ENCODE measurements at regions of chr3 and their contacts with region 1.

Region 1: GRCh38 chr3:196942226-196942914 is at the start of gene NCBP2:
- DNase-seq: peak; percentile 99
- H3K4me3 ChIP-seq: peak within 1 kb of the TSS; percentile 90
- H3K27ac ChIP-seq: peak within 1 kb of the TSS; percentile 83
- H3K4me1 ChIP-seq: peaks cover 23% of the 10 kb centered on the region
- CTCF ChIP-seq: peak; percentile 75
- total RNA-seq, gene NCBP2: 46.4 and 66.7 TPM in 2 replicates

Region 2: DNA sequence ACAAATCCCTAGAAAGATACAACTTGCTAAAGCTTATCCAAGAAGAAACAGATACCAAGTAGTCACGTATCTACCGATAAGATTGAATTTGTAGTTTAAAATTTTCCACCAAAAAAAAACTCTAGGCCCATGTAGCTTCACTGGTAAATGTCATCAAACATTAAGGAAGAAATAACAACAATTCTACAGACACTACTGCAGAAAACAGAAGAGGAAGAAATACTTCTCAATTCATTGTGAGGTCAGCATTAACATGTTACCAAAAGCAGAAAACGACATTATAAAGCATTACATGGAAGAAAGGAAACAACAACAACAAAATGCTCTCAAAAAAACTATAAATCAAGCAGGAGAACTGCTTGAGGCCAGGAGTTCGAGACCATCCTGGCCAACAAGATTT is 576.6 kb before region 1 on chr3:
- CTCF ChIA-PET with region 1: no interaction called
- POLR2A ChIA-PET with region 1: no interaction called
- intact Hi-C with region 1: no loop called
- DNase-seq: no peak
- H3K4me3 ChIP-seq: no peak overlapping the region
- H3K27ac ChIP-seq: no peak overlapping the region
- H3K4me1 ChIP-seq: no peaks in the 10 kb centered on the region
- CTCF ChIP-seq: no peak

Region 3: GRCh38 chr3:196568246-196569002 is 373.9 kb before region 1 on chr3 and contains the starts of genes FBXO45 and WDR53:
- CTCF ChIA-PET with region 1: no interaction called
- POLR2A ChIA-PET with region 1: no interaction called
- intact Hi-C with region 1: loop called (anchors 1 kb)
- DNase-seq: peak; percentile 97
- H3K4me3 ChIP-seq: peak within 1 kb of the TSS; percentile 85
- H3K27ac ChIP-seq: peak within 1 kb of the TSS; percentile 52
- H3K4me1 ChIP-seq: peaks cover 28% of the 10 kb centered on the region
- CTCF ChIP-seq: no peak
- total RNA-seq, gene FBXO45: 10.6 and 12.5 TPM in 2 replicates
- total RNA-seq, gene WDR53: 10.8 TPM in 2 replicates

Region 4: DNA sequence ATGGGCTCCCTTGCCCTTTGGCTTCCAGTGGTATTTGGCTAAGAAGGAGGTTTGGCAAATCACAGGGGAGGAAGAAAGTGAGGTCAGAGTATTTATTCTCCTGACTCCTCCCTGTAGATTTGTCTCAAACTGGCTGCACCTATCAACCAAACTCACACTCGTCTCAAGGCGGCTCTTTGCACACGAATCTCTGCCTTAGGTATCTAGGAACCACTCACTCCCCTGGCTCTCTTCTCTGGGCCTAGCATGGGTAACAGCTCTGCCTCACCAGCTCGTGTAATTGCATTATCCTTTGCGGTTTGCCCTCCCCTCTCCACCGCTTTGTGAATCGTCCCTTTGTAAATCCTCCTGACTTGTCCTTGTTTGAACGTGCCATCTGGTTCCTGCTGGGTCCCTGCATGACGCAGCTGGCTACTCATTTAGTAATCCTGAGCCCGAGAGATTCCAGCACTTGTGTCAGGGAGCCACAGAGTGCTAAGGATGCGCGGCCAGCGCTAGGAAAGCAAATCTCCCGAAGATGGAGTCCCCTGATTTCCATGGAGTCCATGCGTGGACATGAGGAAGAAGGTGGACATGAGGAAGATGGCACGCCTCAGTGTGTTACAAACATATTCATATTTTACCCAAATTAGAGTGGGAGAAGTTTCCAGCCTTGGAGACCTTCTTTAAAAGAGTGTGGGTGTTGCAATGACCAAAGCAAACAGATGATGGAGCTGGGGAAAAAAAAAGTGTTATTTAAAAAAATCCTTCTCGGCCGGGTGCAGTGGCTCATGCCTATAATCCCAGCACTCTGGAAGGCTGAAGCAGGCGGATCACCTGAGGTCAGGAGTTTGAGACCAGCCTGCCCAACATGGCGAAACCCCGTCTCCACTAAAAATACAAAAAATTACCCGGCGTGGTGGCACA is 276.2 kb before region 1 on chr3:
- CTCF ChIA-PET with region 1: no interaction called
- POLR2A ChIA-PET with region 1: no interaction called
- intact Hi-C with region 1: no loop called
- DNase-seq: no peak
- H3K4me3 ChIP-seq: no peak overlapping the region
- H3K27ac ChIP-seq: no peak overlapping the region
- H3K4me1 ChIP-seq: peaks cover 10% of the 10 kb centered on the region
- CTCF ChIP-seq: no peak

Region 5: GRCh38 chr3:196739671-196740480 is 202.5 kb before region 1 on chr3 and contains the start of gene PAK2:
- CTCF ChIA-PET with region 1: no interaction called
- POLR2A ChIA-PET with region 1: interaction called, 5 read pairs
- intact Hi-C with region 1: loop called (anchors 5 kb)
- DNase-seq: peak; percentile 93
- H3K4me3 ChIP-seq: peak within 1 kb of the TSS; percentile 95
- H3K27ac ChIP-seq: peak within 1 kb of the TSS; percentile 85
- H3K4me1 ChIP-seq: peaks cover 11% of the 10 kb centered on the region
- CTCF ChIP-seq: no peak
- total RNA-seq, gene PAK2: 24.5 and 37.9 TPM in 2 replicates

Region 6: GRCh38 chr3:196867507-196868296 is 74.7 kb before region 1 on chr3 and contains the start of gene SENP5:
- CTCF ChIA-PET with region 1: no interaction called
- POLR2A ChIA-PET with region 1: interaction called, 10 read pairs
- intact Hi-C with region 1: loop called (anchors 1 kb)
- DNase-seq: peak; percentile 92
- H3K4me3 ChIP-seq: peak within 1 kb of the TSS; percentile 77
- H3K27ac ChIP-seq: peak within 1 kb of the TSS; percentile 50
- H3K4me1 ChIP-seq: peaks cover 17% of the 10 kb centered on the region
- CTCF ChIP-seq: no peak
- total RNA-seq, gene SENP5: 39.4 and 40.2 TPM in 2 replicates